GM12878 (cell line): ENCODE measurements at regions of chr1 and their contacts with region 1.

Region 1: DNA sequence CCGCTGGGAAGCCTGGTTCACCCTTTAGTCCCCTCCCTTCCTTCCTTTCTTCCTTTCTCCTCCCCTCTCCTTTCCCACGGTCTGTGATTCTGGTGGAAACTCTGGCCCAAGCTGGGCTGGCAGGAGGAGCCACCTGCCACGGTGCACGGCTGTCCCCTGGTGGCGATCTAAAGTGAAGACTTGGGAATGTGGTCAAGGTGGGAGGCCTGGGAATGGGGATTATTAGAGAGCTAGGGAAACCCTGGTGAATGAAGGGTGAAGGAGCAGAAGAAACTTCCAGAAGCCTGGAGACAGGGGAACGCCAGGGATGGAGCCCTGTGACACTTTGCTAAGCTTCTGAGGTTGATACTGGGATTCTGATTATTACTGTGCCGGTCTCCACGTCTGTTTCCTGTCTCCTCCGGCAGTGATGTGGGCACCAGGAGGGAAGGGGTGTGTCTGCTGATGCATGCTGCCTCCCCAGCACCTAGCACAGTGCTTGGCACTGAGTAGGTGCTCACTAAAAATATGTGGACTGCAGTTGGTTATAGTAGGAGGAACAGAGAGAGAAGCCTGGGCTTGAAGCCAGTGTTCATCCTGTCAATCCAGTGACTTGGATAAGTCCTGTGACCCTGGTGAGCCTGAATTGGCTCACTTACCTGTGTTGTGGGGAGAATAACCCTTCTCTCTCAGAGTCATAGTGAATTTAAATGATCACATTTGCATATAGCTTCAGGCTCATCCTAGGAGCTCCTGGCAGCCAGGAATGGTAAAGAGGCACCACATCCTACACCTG is 71.2 kb upstream of the NBPF3 start:
- DNase-seq: no peak
- ATAC-seq: peak; percentile 86
- H3K4me3 ChIP-seq: no peak overlapping the region
- H3K27ac ChIP-seq: no peak overlapping the region
- H3K4me1 ChIP-seq: no peaks in the 10 kb centered on the region; the same call in 1 of the 2 replicates
- H3K27me3 ChIP-seq: no peaks in the 10 kb centered on the region
- CTCF ChIP-seq: peak; percentile 98 to 100 (median 99); a peak in 5 of 6 replicates
- EP300 ChIP-seq: no peak
- POLR2A ChIP-seq: no peak
- RAD21 ChIP-seq: peak; percentile 100

Region 2: GRCh38 chr1:21216835-21217811 is 151.6 kb before region 1 on chr1:
- CTCF ChIA-PET with region 1: interaction called, 67 read pairs
- POLR2A ChIA-PET with region 1: no interaction called
- RAD21 ChIA-PET with region 1: interaction called, 8 read pairs
- SMC1A ChIA-PET with region 1: interaction called, 27 read pairs
- in situ Hi-C with region 1: no loop called
- intact Hi-C with region 1: loop called (anchors 1 kb)
- DNase-seq: no peak
- ATAC-seq: peak; percentile 87
- H3K4me3 ChIP-seq: no peak overlapping the region
- H3K27ac ChIP-seq: no peak overlapping the region
- H3K4me1 ChIP-seq: peaks cover 4% of the 10 kb centered on the region
- H3K27me3 ChIP-seq: no peaks in the 10 kb centered on the region
- CTCF ChIP-seq: peak; percentile 63 to 84 (median 80)
- EP300 ChIP-seq: no peak
- POLR2A ChIP-seq: 0 out of 2 replicates have a peak, but pooled peaks have one; percentile 25
- RAD21 ChIP-seq: peak; percentile 59

Region 3: DNA sequence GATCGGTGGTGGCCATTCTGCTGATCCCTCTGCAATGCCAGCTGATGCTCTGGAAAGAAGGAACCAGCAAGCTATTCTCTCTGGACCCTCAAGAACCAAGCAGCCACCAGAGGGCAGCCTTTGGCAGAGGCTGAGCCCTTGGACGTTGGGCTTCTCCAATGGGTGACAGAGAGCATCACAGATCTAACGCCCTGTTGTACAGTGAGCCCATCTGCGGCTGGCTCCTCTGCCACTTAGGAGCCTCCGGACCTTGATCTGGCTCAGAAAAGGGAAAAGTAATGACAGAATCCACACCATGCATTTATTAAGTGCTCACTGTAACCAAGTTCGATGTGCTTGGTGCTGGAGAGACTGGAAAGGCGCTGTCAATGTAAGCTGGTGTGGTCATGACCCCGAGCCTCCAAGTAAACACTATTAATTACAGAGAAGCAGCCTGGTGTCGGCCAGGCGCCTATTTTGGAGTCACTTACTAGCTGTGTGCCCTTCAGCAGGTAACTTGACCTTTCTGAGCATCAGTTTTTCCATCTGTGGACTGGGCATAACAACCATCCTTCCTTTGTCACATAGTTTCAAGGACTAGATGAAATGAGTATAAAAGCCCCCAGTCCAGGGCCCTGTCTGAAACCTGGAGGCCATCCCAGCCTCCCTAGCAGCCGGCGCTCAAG is 113.3 kb before region 1 on chr1:
- CTCF ChIA-PET with region 1: interaction called, 207 read pairs
- POLR2A ChIA-PET with region 1: interaction called, 5 read pairs
- RAD21 ChIA-PET with region 1: interaction called, 132 read pairs
- SMC1A ChIA-PET with region 1: interaction called, 82 read pairs
- in situ Hi-C with region 1: loop called (anchors 5 kb)
- intact Hi-C with region 1: loop called (anchors 1 kb)
- DNase-seq: peak; percentile 23
- ATAC-seq: peak; percentile 98
- H3K4me3 ChIP-seq: no peak overlapping the region
- H3K27ac ChIP-seq: no peak overlapping the region
- H3K4me1 ChIP-seq: no peaks in the 10 kb centered on the region
- H3K27me3 ChIP-seq: no peaks in the 10 kb centered on the region
- CTCF ChIP-seq: peak; percentile 82 to 86 (median 84)
- EP300 ChIP-seq: no peak
- POLR2A ChIP-seq: no peak
- RAD21 ChIP-seq: peak; percentile 98

Region 4: GRCh38 chr1:21324368-21325141 is 44.1 kb before region 1 on chr1:
- CTCF ChIA-PET with region 1: interaction called, 4 read pairs
- POLR2A ChIA-PET with region 1: interaction called, 3 read pairs
- RAD21 ChIA-PET with region 1: interaction called, 11 read pairs
- SMC1A ChIA-PET with region 1: interaction called, 12 read pairs
- in situ Hi-C with region 1: no loop called
- intact Hi-C with region 1: no loop called
- DNase-seq: peak; percentile 41
- ATAC-seq: peak; percentile 83
- H3K4me3 ChIP-seq: 0 out of 2 replicates have a peak overlapping the region, but pooled peaks have one; percentile 4
- H3K27ac ChIP-seq: peak overlapping the region; percentile 40
- H3K4me1 ChIP-seq: peaks cover 36% of the 10 kb centered on the region
- H3K27me3 ChIP-seq: no peaks in the 10 kb centered on the region
- CTCF ChIP-seq: no peak
- EP300 ChIP-seq: no peak
- POLR2A ChIP-seq: no peak
- RAD21 ChIP-seq: no peak

Region 5: DNA sequence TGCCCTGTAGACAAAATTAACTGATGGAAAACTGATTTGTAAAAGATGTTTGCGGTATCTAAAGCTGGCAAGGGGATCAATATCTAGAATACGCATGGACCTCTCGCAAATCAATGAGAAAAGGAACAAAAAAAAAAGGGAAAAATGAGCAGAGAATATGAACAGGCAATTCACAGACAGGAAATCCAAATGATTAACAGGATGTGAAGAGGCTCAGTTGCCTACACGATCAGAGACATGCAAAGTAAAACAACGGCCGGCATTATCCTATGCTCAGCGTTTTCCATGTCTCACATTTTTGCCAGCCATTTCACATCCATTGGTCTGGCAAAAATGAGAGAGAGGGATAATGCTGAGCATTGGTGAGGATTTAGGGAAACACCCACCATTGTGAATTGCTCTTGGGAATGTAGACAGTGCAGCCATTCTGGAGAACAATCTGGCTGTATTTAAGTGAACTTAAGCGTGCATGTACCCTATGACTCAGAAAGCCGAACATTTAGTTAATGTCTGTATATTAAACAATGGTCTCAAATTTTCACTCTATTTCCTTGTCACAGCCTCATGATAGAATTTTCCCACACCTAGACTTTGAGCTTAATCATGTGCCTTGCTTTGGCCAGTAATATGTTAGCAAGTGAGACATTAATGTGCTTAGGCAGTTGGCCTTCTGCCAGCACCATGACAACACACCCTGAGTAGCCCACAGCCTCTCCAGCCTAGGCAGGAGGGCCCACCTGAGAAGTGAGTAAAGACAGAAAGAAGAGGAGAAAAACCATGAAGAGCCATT is 10.2 kb after region 1 on chr1:
- CTCF ChIA-PET with region 1: interaction called, 5 read pairs
- POLR2A ChIA-PET with region 1: interaction called, 3 read pairs
- RAD21 ChIA-PET with region 1: interaction called, 3 read pairs
- SMC1A ChIA-PET with region 1: interaction called, 11 read pairs
- in situ Hi-C with region 1: no loop called
- intact Hi-C with region 1: no loop called
- DNase-seq: no peak
- ATAC-seq: no peak
- H3K4me3 ChIP-seq: no peak overlapping the region
- H3K27ac ChIP-seq: no peak overlapping the region
- H3K4me1 ChIP-seq: 0 out of 2 replicates have a peak, but pooled peaks cover 2% of the 10 kb centered on the region
- H3K27me3 ChIP-seq: no peaks in the 10 kb centered on the region; a peak in 1 of 4 replicates
- CTCF ChIP-seq: no peak
- EP300 ChIP-seq: no peak
- POLR2A ChIP-seq: no peak
- RAD21 ChIP-seq: no peak

Region 6: GRCh38 chr1:21659099-21659923 is 290.6 kb after region 1 on chr1:
- CTCF ChIA-PET with region 1: interaction called, 3 read pairs
- POLR2A ChIA-PET with region 1: no interaction called
- RAD21 ChIA-PET with region 1: interaction called, 3 read pairs
- SMC1A ChIA-PET with region 1: interaction called, 3 read pairs
- in situ Hi-C with region 1: no loop called
- intact Hi-C with region 1: loop called (anchors 2 kb)
- DNase-seq: no peak
- ATAC-seq: peak; percentile 92
- H3K4me3 ChIP-seq: no peak overlapping the region
- H3K27ac ChIP-seq: no peak overlapping the region
- H3K4me1 ChIP-seq: no peaks in the 10 kb centered on the region
- H3K27me3 ChIP-seq: peaks cover 0 to 2% of the 10 kb centered on the region in 2 experiments; a peak in 1 of 4 replicates
- CTCF ChIP-seq: peak; percentile 75 to 96 (median 87)
- EP300 ChIP-seq: no peak; a peak in 1 of 4 replicates
- POLR2A ChIP-seq: no peak
- RAD21 ChIP-seq: peak; percentile 79